ENCODE measurements at regions of chr1 and their contacts with region 1.

Region 1: GRCh38 chr1:66446261-66447001 is 87.5 kb upstream of the SGIP1 start:
- DNase-seq: no peak
- ATAC-seq: peak; percentile 88
- H3K4me3 ChIP-seq: no peak overlapping the region
- H3K27ac ChIP-seq: no peak overlapping the region
- H3K4me1 ChIP-seq: peaks cover 0 to 4% of the 10 kb centered on the region in 2 donors
- H3K27me3 ChIP-seq: no peaks in the 10 kb centered on the region

Region 2: GRCh38 chr1:65948609-65949229 is 497.7 kb before region 1 on chr1:
- intact Hi-C with region 1: no loop called
- DNase-seq: no peak
- ATAC-seq: peak; percentile 73
- H3K4me3 ChIP-seq: no peak overlapping the region
- H3K27ac ChIP-seq: no peak overlapping the region
- H3K4me1 ChIP-seq: no peaks in the 10 kb centered on the region
- H3K27me3 ChIP-seq: peaks cover 0 to 2% of the 10 kb centered on the region in 2 donors

Region 3: GRCh38 chr1:65958561-65959350 is 487.7 kb before region 1 on chr1:
- intact Hi-C with region 1: loop called (anchors 5 to 10 kb)
- DNase-seq: no peak
- ATAC-seq: peak; percentile 76
- H3K4me3 ChIP-seq: no peak overlapping the region
- H3K27ac ChIP-seq: no peak overlapping the region
- H3K4me1 ChIP-seq: no peaks in the 10 kb centered on the region
- H3K27me3 ChIP-seq: no peaks in the 10 kb centered on the region

Region 4: GRCh38 chr1:66253330-66253921 is 193.0 kb before region 1 on chr1:
- intact Hi-C with region 1: loop called (anchors 1 to 2 kb)
- DNase-seq: no peak
- ATAC-seq: peak; percentile 91
- H3K4me3 ChIP-seq: no peak overlapping the region
- H3K27ac ChIP-seq: no peak overlapping the region
- H3K4me1 ChIP-seq: no peaks in the 10 kb centered on the region
- H3K27me3 ChIP-seq: no peaks in the 10 kb centered on the region

Region 5: DNA sequence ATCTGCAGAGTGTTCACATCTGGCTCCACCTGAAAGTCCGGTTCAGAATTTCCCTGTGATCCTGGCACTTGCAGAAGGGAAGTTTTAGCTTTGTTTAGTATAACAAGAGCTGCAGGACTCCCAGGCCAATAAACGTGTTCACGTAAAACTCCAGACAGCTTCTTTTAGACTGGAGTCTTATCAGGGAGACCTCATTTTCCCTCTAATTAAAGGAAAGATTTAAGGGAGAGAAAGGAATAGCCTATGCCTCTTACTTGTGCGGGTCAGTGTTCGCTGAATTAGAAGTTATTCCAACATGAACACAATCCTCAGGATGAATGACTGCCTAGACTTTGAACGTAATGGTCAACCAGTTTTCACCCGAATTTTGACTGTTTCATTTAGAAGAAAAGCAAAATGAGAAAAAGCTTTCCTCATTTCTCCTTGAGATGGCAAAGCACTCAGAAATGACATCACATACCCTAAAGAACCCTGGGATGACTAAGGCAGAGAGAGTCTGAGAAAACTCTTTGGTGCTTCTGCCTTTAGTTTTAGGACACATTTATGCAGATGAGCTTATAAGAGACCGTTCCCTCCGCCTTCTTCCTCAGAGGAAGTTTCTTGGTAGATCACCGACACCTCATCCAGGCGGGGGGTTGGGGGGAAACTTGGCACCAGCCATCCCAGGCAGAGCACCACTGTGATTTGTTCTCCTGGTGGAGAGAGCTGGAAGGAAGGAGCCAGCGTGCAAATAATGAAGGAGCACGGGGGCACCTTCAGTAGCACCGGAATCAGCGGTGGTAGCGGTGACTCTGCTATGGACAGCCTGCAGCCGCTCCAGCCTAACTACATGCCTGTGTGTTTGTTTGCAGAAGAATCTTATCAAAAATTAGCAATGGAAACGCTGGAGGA is 114.5 kb before region 1 on chr1:
- intact Hi-C with region 1: loop called (anchors 5 to 10 kb)
- DNase-seq: peak; percentile 83 to 86
- ATAC-seq: peak; percentile 78
- H3K4me3 ChIP-seq: peak overlapping the region; percentile 13 to 54
- H3K27ac ChIP-seq: peak overlapping the region; percentile 38 to 91
- H3K4me1 ChIP-seq: peaks cover 0 to 7% of the 10 kb centered on the region in 2 donors
- H3K27me3 ChIP-seq: no peaks in the 10 kb centered on the region